ENCODE measurements at regions of chr20 and their contacts with region 1.

Region 1: DNA sequence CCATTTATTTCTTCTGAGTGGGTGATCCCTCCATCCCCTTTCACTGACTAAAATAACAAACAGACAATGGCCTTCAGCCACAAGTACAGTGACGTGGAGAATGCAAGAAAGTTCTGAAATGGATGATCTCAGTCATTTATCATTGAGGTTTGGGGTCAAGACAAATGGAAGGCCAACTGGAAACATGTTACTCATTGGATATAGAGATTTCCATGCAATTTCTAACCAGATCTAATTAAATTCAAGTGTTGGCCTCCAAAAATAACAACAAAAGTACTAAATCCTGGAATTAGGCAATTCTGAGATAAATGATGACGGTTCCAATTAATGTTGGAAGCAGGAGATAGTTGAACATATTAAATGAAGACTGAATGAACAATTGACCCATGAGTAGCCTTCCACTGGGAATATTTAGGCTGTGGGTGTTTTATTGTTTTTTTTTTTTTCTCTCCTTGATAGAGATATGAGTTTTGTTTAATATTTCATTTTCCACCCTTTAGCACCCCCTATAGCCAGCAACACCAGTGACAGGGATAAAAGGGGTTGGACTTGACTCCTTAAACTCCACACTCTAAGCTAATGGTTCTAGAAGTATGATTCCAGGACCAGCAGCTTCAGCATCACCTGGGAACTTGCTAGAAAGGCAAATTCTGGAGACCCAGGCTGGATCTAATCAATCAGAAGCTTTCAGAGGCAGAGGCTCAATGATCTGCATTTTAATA is 112.8 kb downstream of the BCAS1 start:
- DNase-seq: peak; percentile 55
- ATAC-seq: peak; percentile 40; the same call in 1 of the 2 replicates
- H3K4me3 ChIP-seq: no peak overlapping the region
- H3K27ac ChIP-seq: no peak overlapping the region
- H3K4me1 ChIP-seq: no peaks in the 10 kb centered on the region
- H3K27me3 ChIP-seq: peaks cover 8% of the 10 kb centered on the region; the same call in 1 of the 2 replicates
- CTCF ChIP-seq: peak; percentile 77

Region 2: DNA sequence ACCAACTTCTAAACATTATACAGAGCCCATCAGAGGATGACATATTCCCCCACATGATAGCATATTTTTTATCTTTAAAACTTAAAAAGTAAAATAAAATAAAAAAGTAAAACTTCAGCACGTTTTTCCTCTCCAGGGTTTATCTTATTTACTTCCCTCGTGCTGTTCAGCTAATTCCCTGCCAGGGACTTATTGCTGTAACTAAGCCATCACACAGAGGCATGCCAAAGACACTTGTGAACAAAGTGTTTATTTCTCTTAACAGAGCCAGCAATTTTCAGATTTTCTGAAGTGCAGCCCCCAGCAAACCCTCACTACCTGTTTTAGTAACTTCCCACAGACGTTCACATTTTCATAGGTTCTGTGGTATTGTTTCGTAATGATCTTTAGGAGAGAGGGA is 657.8 kb before region 1 on chr20:
- CTCF ChIA-PET with region 1: interaction called, 11 read pairs
- POLR2A ChIA-PET with region 1: interaction called, 3 read pairs
- intact Hi-C with region 1: no loop called
- DNase-seq: no peak
- ATAC-seq: no peak
- H3K4me3 ChIP-seq: no peak overlapping the region
- H3K27ac ChIP-seq: no peak overlapping the region
- H3K4me1 ChIP-seq: no peaks in the 10 kb centered on the region
- H3K27me3 ChIP-seq: peaks cover 91% of the 10 kb centered on the region
- CTCF ChIP-seq: no peak

Region 3: GRCh38 chr20:53331151-53331973 is 626.2 kb before region 1 on chr20:
- CTCF ChIA-PET with region 1: interaction called, 10 read pairs
- POLR2A ChIA-PET with region 1: no interaction called
- intact Hi-C with region 1: no loop called
- DNase-seq: peak; percentile 83
- ATAC-seq: peak; percentile 42
- H3K4me3 ChIP-seq: no peak overlapping the region
- H3K27ac ChIP-seq: no peak overlapping the region
- H3K4me1 ChIP-seq: peaks cover 9% of the 10 kb centered on the region
- H3K27me3 ChIP-seq: peaks cover 42% of the 10 kb centered on the region
- CTCF ChIP-seq: no peak

Region 4: DNA sequence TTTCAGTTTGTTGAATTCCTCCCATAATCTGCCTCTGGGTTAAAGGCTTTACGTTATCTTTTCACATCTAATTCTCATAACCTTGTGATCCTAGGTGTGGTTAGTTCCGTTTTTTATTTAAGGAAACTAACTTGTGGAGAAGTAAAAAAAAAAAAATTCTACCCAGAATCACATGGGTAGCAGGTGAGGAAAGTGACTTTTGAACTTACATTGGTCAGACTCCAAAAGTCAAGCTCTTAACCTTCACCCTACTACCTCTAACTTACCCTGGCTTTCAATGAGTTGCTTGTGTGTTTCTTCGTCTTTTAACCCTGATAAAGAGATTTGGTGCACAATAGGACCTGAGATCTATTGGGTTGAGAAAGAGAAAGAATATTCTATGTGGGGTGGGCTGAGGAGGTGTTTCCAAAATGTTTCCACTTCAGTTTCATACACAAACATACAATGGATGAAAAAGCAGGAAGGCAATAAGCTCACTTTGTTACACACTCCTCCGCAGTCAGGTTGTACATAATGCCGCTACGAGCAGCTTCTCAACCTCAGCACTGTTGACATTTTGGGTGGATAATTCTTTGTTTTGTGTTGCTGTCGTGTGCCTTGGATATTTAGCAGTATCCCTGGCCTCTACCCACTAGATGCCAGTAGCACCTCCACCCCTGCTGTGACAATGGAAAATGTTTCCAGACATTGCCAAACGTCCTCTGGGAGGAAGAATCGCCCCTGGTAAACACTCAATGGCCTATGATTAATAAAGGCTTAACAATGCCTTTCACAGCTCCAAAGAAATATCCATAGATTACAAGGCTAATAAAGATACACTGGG is 171.0 kb before region 1 on chr20:
- CTCF ChIA-PET with region 1: no interaction called
- POLR2A ChIA-PET with region 1: no interaction called
- intact Hi-C with region 1: no loop called
- DNase-seq: peak; percentile 71
- ATAC-seq: peak; percentile 46
- H3K4me3 ChIP-seq: peak overlapping the region; percentile 27
- H3K27ac ChIP-seq: peak overlapping the region; percentile 87
- H3K4me1 ChIP-seq: peaks cover 58% of the 10 kb centered on the region
- H3K27me3 ChIP-seq: no peaks in the 10 kb centered on the region
- CTCF ChIP-seq: peak; percentile 39

Region 5: DNA sequence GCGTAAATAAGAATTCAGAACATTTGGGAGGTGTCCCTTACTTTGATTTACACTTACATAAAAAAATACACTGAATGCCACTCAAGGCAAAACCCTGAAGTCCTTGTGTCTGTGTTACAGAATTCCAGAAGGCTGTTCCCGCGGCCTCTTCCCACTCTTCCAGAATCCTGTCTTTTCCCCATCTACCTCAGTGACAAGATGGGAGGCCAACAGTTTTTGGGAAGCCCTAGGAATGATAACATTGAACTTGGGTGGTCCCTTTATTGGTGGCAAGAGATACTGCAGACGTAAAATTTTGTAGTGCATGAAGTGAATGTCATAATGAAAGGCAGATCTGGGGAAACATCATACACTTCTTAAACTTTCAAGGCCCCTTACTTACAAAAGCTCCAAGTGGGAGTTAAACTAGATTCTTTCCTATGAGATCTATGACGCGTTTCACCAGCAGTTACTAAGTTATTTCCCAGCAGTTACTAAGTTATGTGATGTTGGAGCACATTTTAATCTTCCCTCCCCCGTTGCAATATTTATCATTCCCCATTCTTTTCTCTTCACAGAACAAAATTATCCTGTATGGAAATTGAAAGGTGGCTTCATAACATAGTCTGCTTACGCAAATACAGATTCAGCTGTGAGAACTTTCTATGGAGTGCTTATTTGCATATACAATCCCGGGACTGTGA is 33.3 kb after region 1 on chr20:
- CTCF ChIA-PET with region 1: no interaction called
- POLR2A ChIA-PET with region 1: no interaction called
- intact Hi-C with region 1: no loop called
- DNase-seq: no peak
- ATAC-seq: no peak
- H3K4me3 ChIP-seq: no peak overlapping the region
- H3K27ac ChIP-seq: no peak overlapping the region
- H3K4me1 ChIP-seq: no peaks in the 10 kb centered on the region
- H3K27me3 ChIP-seq: peaks cover 95% of the 10 kb centered on the region
- CTCF ChIP-seq: no peak

Measured in PC-3 (cell line).